ENCODE measurements at regions of chr3 and their contacts with region 1.

Region 1: DNA sequence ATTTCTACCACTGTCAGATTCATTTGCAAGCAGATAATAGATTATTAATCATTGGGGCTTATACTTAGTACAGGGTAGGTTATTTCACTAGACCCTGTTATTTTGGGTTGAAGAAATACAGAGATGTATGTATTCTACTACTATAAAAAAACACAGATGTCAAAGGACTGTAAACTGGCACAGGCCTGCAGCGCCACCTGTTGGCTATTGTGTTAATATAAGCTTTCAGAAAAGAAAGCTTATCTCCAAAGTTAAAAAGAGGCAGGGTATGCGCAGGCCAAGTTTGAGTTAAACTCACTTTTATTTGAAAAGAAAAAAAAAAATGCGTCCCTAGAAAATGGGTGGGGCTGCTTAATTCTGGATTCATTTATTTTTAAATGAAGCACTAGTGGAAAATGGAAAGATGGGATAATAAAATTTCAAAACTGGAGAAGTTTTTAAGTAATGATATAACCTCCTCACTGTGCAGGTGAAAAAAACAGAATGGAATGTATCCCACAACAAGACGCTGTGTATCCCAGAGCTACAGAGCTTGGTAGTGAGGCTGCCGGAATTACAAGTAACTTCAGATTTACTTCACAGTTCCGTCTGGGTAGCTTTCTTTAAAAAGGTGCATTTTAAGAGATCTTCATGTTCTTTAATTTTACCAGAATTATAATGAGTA is 407.2 kb upstream of the TGFBR2 start:
- DNase-seq: peak; percentile 70 to 83 (median 73)
- ATAC-seq: peak in 3 of 4 donors; percentile 52 to 76 (median 67)
- H3K4me3 ChIP-seq: no peak overlapping the region
- H3K27ac ChIP-seq: peak overlapping the region in 2 of 12 donors; percentile 3 to 17
- H3K4me1 ChIP-seq: peaks cover 0 to 25% (median 17%) of the 10 kb centered on the region in 12 donors
- H3K27me3 ChIP-seq: no peaks in the 10 kb centered on the region
- CTCF ChIP-seq: peak; percentile 81 to 95 (median 86)
- POLR2A ChIP-seq: no peak

Region 2: DNA sequence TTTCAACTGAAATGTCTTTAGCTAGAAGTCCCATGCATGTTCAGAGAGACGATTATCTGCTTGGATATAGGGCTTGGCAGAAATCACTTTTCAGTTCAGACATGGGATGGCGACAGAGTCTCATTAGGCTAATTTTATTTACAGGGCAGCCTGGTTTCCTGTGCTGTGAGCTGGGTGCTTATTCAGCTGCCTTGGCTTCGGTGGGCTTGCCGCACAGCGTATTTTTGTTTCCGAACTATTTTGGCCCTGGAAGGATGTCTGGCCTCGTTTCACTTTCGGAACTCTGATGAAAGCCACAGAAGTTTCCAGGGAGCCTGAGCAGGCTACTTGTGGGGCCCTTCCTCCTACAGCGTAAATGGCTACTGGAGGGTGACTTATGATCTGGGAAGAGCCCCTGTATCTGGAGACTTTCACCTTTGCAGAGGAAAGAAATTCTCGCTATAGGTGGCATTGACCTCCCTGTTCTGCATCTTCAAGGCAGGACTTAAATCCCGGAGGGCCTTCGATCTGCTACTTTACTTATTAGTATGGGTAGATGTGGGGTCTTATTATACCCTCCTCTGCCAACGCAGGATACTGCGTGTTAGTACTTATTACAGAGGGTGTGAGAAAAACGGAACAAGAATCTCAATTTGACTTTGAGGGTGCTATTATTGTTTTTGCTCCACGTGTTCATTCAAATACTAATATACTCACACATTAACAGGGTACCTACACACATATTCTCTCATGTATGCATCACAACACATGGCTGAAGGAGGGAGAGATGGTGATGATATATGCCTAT is 1282.3 kb before region 1 on chr3:
- intact Hi-C with region 1: loop called in 1 of 10 experiments (anchors 10 kb)
- DNase-seq: peak in 4 of 5 donors; percentile 65 to 82 (median 70)
- ATAC-seq: peak; percentile 85 to 98 (median 96)
- H3K4me3 ChIP-seq: peak overlapping the region in 9 of 12 donors; percentile 23 to 49 (median 39)
- H3K27ac ChIP-seq: peak overlapping the region; percentile 32 to 73 (median 53)
- H3K4me1 ChIP-seq: peaks cover 0 to 26% (median 10%) of the 10 kb centered on the region in 12 donors
- H3K27me3 ChIP-seq: no peaks in the 10 kb centered on the region
- CTCF ChIP-seq: peak; percentile 47 to 77 (median 67)
- POLR2A ChIP-seq: no peak

Region 3: GRCh38 chr3:30042274-30042859 is 156.9 kb before region 1 on chr3:
- intact Hi-C with region 1: loop called (anchors 1 to 5 kb)
- DNase-seq: peak in 4 of 5 donors; percentile 35 to 55 (median 50)
- ATAC-seq: peak in 3 of 4 donors; percentile 46 to 78 (median 66)
- H3K4me3 ChIP-seq: no peak overlapping the region
- H3K27ac ChIP-seq: no peak overlapping the region
- H3K4me1 ChIP-seq: peaks cover 0 to 21% (median 1%) of the 10 kb centered on the region in 12 donors
- H3K27me3 ChIP-seq: no peaks in the 10 kb centered on the region
- CTCF ChIP-seq: peak; percentile 67 to 85 (median 78)
- POLR2A ChIP-seq: no peak

Region 4: DNA sequence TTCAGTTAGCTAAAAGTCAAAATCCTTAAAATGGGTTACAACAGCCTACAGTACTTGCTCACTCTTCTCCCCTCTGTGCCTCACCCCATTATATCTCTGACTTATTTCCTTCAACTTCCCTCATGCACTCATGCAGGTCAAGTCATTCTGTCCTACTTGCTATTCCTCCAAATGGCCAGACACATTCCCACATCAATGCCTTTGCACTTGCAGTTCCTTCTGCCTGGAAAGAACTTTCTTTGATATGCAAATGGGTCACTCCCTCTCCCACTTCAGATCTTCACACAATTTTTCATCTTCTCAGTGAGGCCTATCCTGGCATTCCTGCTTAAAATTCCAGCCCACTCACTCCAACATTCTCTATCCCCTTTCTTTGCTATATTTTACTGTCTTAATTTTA is 140.0 kb before region 1 on chr3:
- intact Hi-C with region 1: no loop called
- DNase-seq: no peak
- ATAC-seq: no peak
- H3K4me3 ChIP-seq: no peak overlapping the region
- H3K27ac ChIP-seq: no peak overlapping the region
- H3K4me1 ChIP-seq: no peaks in the 10 kb centered on the region
- H3K27me3 ChIP-seq: no peaks in the 10 kb centered on the region
- CTCF ChIP-seq: no peak
- POLR2A ChIP-seq: no peak

Region 5: DNA sequence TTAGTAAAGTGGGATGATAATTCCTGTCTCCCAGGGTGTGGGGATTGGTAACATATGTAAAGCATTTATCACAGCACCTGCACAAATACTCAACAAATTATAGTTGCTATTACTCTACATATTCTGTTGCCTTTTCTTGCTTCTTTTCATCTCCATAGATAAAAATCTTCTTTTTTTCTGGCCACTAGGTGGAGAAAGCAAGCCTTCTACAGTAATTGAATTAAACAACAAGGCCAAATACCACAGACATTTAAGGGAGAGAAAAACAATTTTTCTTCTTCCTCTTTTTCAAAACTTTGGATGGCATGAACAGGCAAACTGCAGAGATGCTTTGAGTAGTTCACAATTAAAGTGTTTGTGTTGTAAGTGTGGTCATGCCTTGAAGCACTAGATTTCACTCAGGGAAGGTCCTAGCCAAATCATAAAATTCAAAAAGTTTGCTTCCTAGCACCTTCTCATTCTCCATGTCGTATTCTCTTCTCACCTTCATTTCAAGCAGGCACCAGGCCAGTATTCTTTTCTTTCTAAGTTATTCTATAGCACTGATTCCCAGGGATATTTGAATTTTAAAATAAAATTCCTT is 86.2 kb before region 1 on chr3:
- intact Hi-C with region 1: loop called (anchors 1 to 5 kb)
- DNase-seq: no peak
- ATAC-seq: peak in 2 of 4 donors; percentile 30 to 57
- H3K4me3 ChIP-seq: no peak overlapping the region
- H3K27ac ChIP-seq: no peak overlapping the region
- H3K4me1 ChIP-seq: peaks cover 0 to 17% (median 6%) of the 10 kb centered on the region in 12 donors
- H3K27me3 ChIP-seq: no peaks in the 10 kb centered on the region
- CTCF ChIP-seq: peak; percentile 56 to 81 (median 70)
- POLR2A ChIP-seq: no peak

Region 6: GRCh38 chr3:30135190-30135589 is 64.0 kb before region 1 on chr3:
- intact Hi-C with region 1: loop called in 2 of 10 experiments (anchors 2 to 5 kb)
- DNase-seq: no peak
- ATAC-seq: peak in 3 of 4 donors; percentile 48 to 77 (median 52)
- H3K4me3 ChIP-seq: no peak overlapping the region
- H3K27ac ChIP-seq: no peak overlapping the region
- H3K4me1 ChIP-seq: peaks cover 0 to 5% (median 1%) of the 10 kb centered on the region in 12 donors
- H3K27me3 ChIP-seq: no peaks in the 10 kb centered on the region
- CTCF ChIP-seq: peak in 10 of 12 donors; percentile 26 to 63 (median 42)
- POLR2A ChIP-seq: no peak

Region 7: GRCh38 chr3:30145281-30145680 is 53.9 kb before region 1 on chr3:
- intact Hi-C with region 1: no loop called
- DNase-seq: no peak
- ATAC-seq: no peak
- H3K4me3 ChIP-seq: no peak overlapping the region
- H3K27ac ChIP-seq: no peak overlapping the region
- H3K4me1 ChIP-seq: peaks cover 0 to 16% (median 5%) of the 10 kb centered on the region in 12 donors
- H3K27me3 ChIP-seq: no peaks in the 10 kb centered on the region
- CTCF ChIP-seq: no peak
- POLR2A ChIP-seq: no peak

Region 8: DNA sequence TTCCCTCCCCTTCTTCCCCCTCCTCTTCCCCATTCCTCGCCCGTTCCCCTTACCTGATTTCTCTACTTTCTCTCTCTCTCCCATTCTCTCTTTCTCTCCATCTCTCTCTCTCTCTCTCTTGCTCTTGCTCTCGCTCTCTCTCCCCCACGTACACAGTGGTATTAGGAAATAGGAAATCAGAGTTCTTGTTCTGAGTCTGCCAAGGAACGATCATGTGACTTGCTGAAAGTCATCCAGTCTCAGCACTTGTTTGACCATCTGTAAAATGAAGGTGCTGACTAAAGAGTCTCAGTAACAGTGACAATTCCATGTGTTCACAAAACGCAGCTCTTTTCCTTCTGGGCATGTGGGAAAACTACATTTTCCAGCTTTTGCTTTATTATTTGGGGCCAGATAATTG is 37.9 kb before region 1 on chr3:
- intact Hi-C with region 1: loop called in 3 of 10 experiments (anchors 2 to 5 kb)
- DNase-seq: peak in 4 of 5 donors; percentile 31 to 36 (median 32)
- ATAC-seq: peak; percentile 84 to 89 (median 86)
- H3K4me3 ChIP-seq: peak overlapping the region in 7 of 12 donors; percentile 11 to 40 (median 21)
- H3K27ac ChIP-seq: peak overlapping the region in 7 of 12 donors; percentile 3 to 66 (median 31)
- H3K4me1 ChIP-seq: peaks cover 0 to 38% (median 20%) of the 10 kb centered on the region in 12 donors
- H3K27me3 ChIP-seq: no peaks in the 10 kb centered on the region
- CTCF ChIP-seq: no peak
- POLR2A ChIP-seq: no peak

Region 9: DNA sequence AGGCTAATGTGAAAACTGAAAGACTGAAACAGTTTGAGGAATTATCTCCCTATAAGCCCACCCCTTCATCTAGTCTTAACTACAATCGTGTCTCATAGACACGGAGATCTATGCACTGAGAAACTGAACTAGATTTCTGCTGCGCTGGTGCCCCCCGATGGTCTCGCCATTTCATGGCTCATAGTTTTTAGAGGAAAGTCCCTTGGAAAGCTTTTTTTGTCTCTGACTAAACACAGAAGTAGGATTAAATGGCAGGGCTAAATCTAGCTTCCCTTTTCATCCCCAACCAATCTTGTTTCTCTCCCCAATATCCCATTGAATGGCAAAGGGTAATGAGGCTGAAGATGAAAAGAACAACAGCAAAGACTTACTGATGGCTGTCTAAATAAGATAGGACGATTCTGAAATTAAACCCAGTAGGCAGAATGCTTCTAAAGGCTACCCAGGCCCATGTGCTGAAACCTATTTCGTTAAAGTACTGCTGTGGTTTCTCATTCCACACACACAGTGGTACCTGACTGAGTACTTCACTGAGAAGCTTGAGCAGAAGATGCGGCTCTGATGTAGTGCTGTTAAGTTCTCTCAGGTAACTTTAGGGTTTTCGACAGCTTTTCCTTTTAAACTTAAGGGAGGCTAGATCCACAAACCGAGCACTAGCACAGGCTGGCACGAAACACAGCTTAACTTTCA is 552.5 kb after region 1 on chr3:
- intact Hi-C with region 1: loop called in 1 of 10 experiments (anchors 5 kb)
- DNase-seq: peak in 4 of 5 donors; percentile 18 to 57 (median 32)
- ATAC-seq: peak in 3 of 4 donors; percentile 39 to 57 (median 53)
- H3K4me3 ChIP-seq: no peak overlapping the region
- H3K27ac ChIP-seq: no peak overlapping the region
- H3K4me1 ChIP-seq: peaks cover 0 to 26% (median 0%) of the 10 kb centered on the region in 12 donors
- H3K27me3 ChIP-seq: no peaks in the 10 kb centered on the region
- CTCF ChIP-seq: peak in 11 of 12 donors; percentile 24 to 63 (median 45)
- POLR2A ChIP-seq: no peak

Measured in heart left ventricle (tissue), 16 donors.